ENCODE measurements at regions of chr1 and their contacts with region 1.

Region 1: GRCh38 chr1:27662707-27663393 is 9.1 kb downstream of the IFI6 start:
- DNase-seq: peak; percentile 77 to 85
- H3K4me3 ChIP-seq: no peak overlapping the region
- H3K27ac ChIP-seq: peak overlapping the region; percentile 46 to 54
- H3K4me1 ChIP-seq: no peaks in the 10 kb centered on the region
- H3K27me3 ChIP-seq: no peaks in the 10 kb centered on the region
- CTCF ChIP-seq: peak; percentile 94 to 96 (median 94)
- POLR2A ChIP-seq: no peak

Region 2: GRCh38 chr1:27392096-27392777 is 270.6 kb before region 1 on chr1 and contains the start of gene GPR3:
- intact Hi-C with region 1: loop called (anchors 10 kb)
- DNase-seq: peak; percentile 86 to 87
- H3K4me3 ChIP-seq: peak within 1 kb of the TSS; percentile 33 to 75 (median 54)
- H3K27ac ChIP-seq: peak within 1 kb of the TSS; percentile 46 to 71
- H3K4me1 ChIP-seq: peaks cover 0 to 8% of the 10 kb centered on the region in 2 donors
- H3K27me3 ChIP-seq: no peaks in the 10 kb centered on the region
- CTCF ChIP-seq: peak; percentile 14 to 47 (median 42)
- POLR2A ChIP-seq: no peak
- total RNA-seq, gene GPR3: 0.16 to 0.66 TPM in 2 of 3 donors, not detected in the other

Region 3: DNA sequence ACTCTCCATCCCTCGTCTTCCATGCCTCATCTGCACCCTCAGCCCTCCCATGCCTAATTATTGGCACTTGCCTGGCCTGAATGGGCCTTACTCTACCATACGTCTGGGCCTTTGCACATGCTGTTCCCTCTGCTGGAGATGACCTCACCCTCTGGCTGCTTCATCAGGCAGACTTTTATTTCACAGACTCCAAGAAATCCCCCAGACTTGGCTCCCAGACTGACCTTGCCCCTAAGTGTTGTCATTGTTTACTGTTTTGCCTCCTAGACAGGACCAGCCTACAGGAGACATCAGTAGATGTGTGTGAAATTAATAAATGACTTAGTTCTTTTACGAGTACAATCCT is 53.7 kb before region 1 on chr1:
- intact Hi-C with region 1: loop called (anchors 2 kb)
- DNase-seq: no peak
- H3K4me3 ChIP-seq: no peak overlapping the region
- H3K27ac ChIP-seq: no peak overlapping the region
- H3K4me1 ChIP-seq: no peaks in the 10 kb centered on the region
- H3K27me3 ChIP-seq: no peaks in the 10 kb centered on the region
- CTCF ChIP-seq: no peak
- POLR2A ChIP-seq: no peak